ENCODE measurements at regions of chr3 and their contacts with region 1.

Region 1: DNA sequence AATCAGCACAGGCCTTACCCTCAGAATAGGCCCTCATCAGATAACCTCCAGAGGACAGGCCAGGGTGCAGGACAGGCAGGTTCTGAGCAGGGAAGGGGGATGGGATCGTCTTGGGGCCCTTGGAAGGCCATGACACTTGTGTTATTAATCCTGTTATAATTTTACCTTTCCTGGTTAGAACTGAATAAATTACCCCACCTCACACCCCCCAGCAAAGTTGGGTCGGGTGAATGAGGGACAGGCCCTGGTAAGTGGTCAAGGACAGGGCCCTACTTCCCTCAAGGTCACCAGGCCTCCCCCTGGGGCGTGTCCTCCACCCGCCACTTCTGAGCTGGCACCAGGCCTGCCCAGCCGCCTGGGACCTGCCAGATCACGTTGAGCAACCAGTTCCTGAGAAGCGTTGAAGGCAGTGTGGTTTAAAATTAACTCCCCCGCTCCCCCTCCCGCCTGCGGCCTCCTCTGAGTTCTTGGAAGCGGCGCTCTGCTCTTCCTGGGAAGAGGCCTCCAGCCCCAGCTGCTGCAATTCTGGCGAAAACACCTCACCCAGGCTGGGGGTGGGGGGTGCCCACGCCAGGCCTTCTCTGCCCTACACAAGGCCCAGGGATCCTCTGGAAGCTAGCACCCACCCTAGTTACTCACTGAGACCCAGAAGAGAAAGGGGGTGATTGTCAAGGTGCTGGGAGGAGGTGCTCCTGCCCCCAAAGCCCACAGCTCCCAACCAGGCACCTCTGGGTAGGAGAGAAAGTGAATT is 10.6 kb downstream of the CISH start:
- DNase-seq: peak; percentile 84
- H3K4me3 Mint-ChIP-seq: peak overlapping the region; percentile 99
- H3K27ac Mint-ChIP-seq: peak overlapping the region; percentile 98
- H3K4me1 Mint-ChIP-seq: peaks cover 85% of the 10 kb centered on the region
- H3K27me3 Mint-ChIP-seq: no peaks in the 10 kb centered on the region

Region 2: GRCh38 chr3:50542177-50543034 is 58.6 kb before region 1 on chr3:
- CTCF ChIA-PET with region 1: no interaction called
- POLR2A ChIA-PET with region 1: no interaction called
- DNase-seq: peak; percentile 64
- H3K4me3 Mint-ChIP-seq: no peak overlapping the region
- H3K27ac Mint-ChIP-seq: no peak overlapping the region
- H3K4me1 Mint-ChIP-seq: no peaks in the 10 kb centered on the region
- H3K27me3 Mint-ChIP-seq: peaks cover 16% of the 10 kb centered on the region

Region 3: GRCh38 chr3:50580683-50581458 is 20.1 kb before region 1 on chr3:
- CTCF ChIA-PET with region 1: interaction called, 211 read pairs
- POLR2A ChIA-PET with region 1: no interaction called
- DNase-seq: no peak
- H3K4me3 Mint-ChIP-seq: no peak overlapping the region
- H3K27ac Mint-ChIP-seq: peak overlapping the region; percentile 88
- H3K4me1 Mint-ChIP-seq: peaks cover 84% of the 10 kb centered on the region
- H3K27me3 Mint-ChIP-seq: no peaks in the 10 kb centered on the region

Region 4: GRCh38 chr3:50587806-50588758 is 12.9 kb before region 1 on chr3:
- CTCF ChIA-PET with region 1: interaction called, 211 read pairs
- POLR2A ChIA-PET with region 1: interaction called, 76 read pairs
- DNase-seq: peak; percentile 71
- H3K4me3 Mint-ChIP-seq: peak overlapping the region; percentile 45
- H3K27ac Mint-ChIP-seq: peak overlapping the region; percentile 96
- H3K4me1 Mint-ChIP-seq: peaks cover 89% of the 10 kb centered on the region
- H3K27me3 Mint-ChIP-seq: no peaks in the 10 kb centered on the region

Region 5: GRCh38 chr3:50749822-50750221 is 148.8 kb after region 1 on chr3:
- CTCF ChIA-PET with region 1: no interaction called
- POLR2A ChIA-PET with region 1: no interaction called
- DNase-seq: no peak
- H3K4me3 Mint-ChIP-seq: no peak overlapping the region
- H3K27ac Mint-ChIP-seq: no peak overlapping the region
- H3K4me1 Mint-ChIP-seq: no peaks in the 10 kb centered on the region
- H3K27me3 Mint-ChIP-seq: no peaks in the 10 kb centered on the region

Measured in activated CD4-positive, alpha-beta T cell treated with anti-CD3 and anti-CD28 coated beads, Interleukin-2, amount 10 ng/mL, durations not matched to agents 7 days and 5 days (primary cell).